Prostate gland (tissue), 2 donors: ENCODE measurements at regions of chr4 and their contacts with region 1.

Region 1: GRCh38 chr4:167021545-167022155 is 212.6 kb downstream of the SPOCK3 start:
- DNase-seq: peak; percentile 69
- H3K4me3 ChIP-seq: no peak overlapping the region
- H3K27ac ChIP-seq: peak overlapping the region in 1 of 2 donors; percentile 51
- H3K4me1 ChIP-seq: no peaks in the 10 kb centered on the region
- H3K27me3 ChIP-seq: no peaks in the 10 kb centered on the region
- CTCF ChIP-seq: peak; percentile 68 to 96 (median 76)
- POLR2A ChIP-seq: no peak

Region 2: DNA sequence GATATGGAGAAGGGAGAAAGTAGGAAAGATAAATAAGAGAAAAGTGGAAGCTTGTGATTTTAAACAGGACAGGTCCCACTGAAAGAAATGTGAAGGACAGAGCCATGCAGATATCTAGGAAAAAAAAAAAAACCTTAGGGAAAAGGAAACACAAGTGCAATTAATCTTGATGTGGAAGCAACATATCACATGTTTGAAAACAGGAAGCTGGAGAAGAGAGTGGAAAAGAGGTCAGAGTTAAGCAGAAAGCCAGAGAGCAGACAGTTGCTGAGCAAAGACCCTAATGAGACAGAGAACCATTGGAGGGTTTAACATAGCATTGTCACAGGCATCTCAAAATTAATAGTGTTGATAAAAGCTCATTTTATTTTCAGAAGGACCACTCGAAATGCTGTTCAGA is 123.0 kb after region 1 on chr4:
- intact Hi-C with region 1: no loop called
- DNase-seq: no peak
- H3K4me3 ChIP-seq: no peak overlapping the region
- H3K27ac ChIP-seq: no peak overlapping the region
- H3K4me1 ChIP-seq: no peaks in the 10 kb centered on the region
- H3K27me3 ChIP-seq: no peaks in the 10 kb centered on the region
- CTCF ChIP-seq: no peak
- POLR2A ChIP-seq: no peak

Region 3: GRCh38 chr4:167290678-167291077 is 269.0 kb after region 1 on chr4:
- intact Hi-C with region 1: loop called (anchors 5 kb)
- DNase-seq: no peak
- H3K4me3 ChIP-seq: no peak overlapping the region
- H3K27ac ChIP-seq: no peak overlapping the region
- H3K4me1 ChIP-seq: no peaks in the 10 kb centered on the region
- H3K27me3 ChIP-seq: no peaks in the 10 kb centered on the region
- CTCF ChIP-seq: peak in 3 of 4 experiments; percentile 36 to 41 (median 37)
- POLR2A ChIP-seq: no peak

Region 4: GRCh38 chr4:167359711-167360110 is 338.1 kb after region 1 on chr4:
- intact Hi-C with region 1: no loop called
- DNase-seq: no peak
- H3K4me3 ChIP-seq: no peak overlapping the region
- H3K27ac ChIP-seq: no peak overlapping the region
- H3K4me1 ChIP-seq: no peaks in the 10 kb centered on the region
- H3K27me3 ChIP-seq: no peaks in the 10 kb centered on the region
- CTCF ChIP-seq: no peak
- POLR2A ChIP-seq: no peak

Region 5: DNA sequence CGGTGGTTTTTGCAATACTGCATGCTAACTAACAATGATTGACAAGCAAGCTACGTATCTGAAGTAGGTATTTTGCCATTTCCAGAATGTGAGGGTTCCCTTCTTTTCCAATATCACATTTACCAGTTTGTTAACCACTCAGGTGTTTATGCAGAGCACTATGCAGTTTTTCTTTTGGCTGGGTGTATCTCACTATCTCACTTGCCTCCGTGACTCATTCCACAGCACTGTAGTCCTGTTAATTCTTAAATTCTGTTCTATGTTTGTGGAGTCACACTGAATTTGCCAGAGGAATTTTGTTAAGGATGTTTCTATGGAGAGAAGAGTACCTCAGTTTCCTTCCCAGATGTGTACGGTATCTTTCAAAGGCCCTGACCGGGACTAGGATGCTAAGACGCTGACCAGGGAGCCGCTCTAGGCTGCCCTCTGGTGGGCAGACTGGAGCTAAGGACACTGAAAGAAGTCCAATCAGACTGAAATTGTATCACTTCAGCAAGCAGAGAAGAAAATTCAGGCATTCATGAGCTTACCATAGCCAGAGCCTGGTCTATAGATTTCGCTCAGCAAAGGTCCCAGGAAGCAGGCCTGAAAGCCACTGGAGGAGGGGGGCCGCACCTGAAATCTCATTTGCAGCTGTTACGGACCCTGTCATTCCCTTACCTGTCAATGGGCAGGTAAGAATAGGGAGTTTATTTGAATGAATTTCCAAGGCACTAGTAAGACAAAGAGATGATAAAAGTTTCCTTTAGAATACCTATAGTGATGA is 601.0 kb after region 1 on chr4:
- intact Hi-C with region 1: loop called (anchors 10 kb)
- DNase-seq: peak; percentile 13
- H3K4me3 ChIP-seq: no peak overlapping the region
- H3K27ac ChIP-seq: no peak overlapping the region
- H3K4me1 ChIP-seq: no peaks in the 10 kb centered on the region
- H3K27me3 ChIP-seq: no peaks in the 10 kb centered on the region
- CTCF ChIP-seq: peak in 3 of 4 experiments; percentile 42 to 45 (median 45)
- POLR2A ChIP-seq: no peak

Region 6: GRCh38 chr4:168076989-168077725 is 1055.5 kb after region 1 on chr4:
- intact Hi-C with region 1: loop called (anchors 10 kb)
- DNase-seq: peak; percentile 61
- H3K4me3 ChIP-seq: no peak overlapping the region
- H3K27ac ChIP-seq: no peak overlapping the region
- H3K4me1 ChIP-seq: no peaks in the 10 kb centered on the region
- H3K27me3 ChIP-seq: no peaks in the 10 kb centered on the region
- CTCF ChIP-seq: peak; percentile 44 to 79 (median 68)
- POLR2A ChIP-seq: no peak